K562 (cell line): ENCODE measurements at regions of chr1 and their contacts with region 1.

Region 1: DNA sequence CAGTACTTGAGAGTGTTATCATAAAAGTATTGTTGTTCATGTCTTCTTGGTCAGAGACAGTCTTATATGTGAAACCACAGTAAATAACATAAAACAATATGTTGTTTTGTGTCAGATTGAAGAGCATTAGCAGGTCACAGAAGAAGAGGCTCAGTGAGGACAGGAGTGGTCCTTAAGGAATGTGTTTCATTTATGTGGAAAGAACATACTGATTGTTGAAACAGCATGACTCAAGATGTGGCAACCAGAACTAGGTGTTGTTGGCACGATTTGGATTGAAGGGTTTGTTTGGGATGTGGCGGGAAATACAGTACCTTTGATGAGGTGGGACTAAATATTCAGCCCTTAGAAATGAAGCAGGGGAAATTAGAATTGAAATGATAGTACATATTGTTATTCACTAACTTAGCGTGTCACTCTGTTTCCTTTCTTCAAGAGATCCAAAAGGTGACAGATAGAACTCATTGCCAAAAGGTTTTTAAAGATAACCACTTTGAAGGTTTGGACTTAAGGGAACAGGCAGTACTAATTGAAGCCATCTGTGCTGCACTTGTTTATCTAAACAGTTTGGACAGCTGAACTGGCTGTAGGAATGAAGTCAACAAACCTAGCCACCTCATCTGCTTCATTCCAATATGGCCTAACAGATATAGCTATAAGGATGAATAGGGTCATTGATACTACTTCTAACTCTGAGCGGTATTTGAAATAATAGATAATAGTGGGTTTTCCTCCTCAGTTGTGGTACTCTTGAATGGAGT is 14.4 kb downstream of the RALGPS2 start:
- DNase-seq: no peak
- ATAC-seq: no peak
- H3K4me3 ChIP-seq: no peak overlapping the region
- H3K27ac ChIP-seq: no peak overlapping the region
- H3K4me1 ChIP-seq: no peaks in the 10 kb centered on the region
- H3K27me3 ChIP-seq: no peaks in the 10 kb centered on the region; a peak in 1 of 5 replicates
- CTCF ChIP-seq: no peak
- EP300 ChIP-seq: no peak
- POLR2A ChIP-seq: no peak
- RAD21 ChIP-seq: no peak

Region 2: GRCh38 chr1:178682429-178682828 is 57.0 kb before region 1 on chr1:
- CTCF ChIA-PET with region 1: no interaction called
- POLR2A ChIA-PET with region 1: no interaction called
- in situ Hi-C with region 1: no loop called
- intact Hi-C with region 1: no loop called
- DNase-seq: no peak
- ATAC-seq: no peak
- H3K4me3 ChIP-seq: no peak overlapping the region
- H3K27ac ChIP-seq: no peak overlapping the region
- H3K4me1 ChIP-seq: no peaks in the 10 kb centered on the region
- H3K27me3 ChIP-seq: no peaks in the 10 kb centered on the region; a peak in 1 of 5 replicates
- CTCF ChIP-seq: no peak
- EP300 ChIP-seq: no peak
- POLR2A ChIP-seq: no peak
- RAD21 ChIP-seq: no peak

Region 3: DNA sequence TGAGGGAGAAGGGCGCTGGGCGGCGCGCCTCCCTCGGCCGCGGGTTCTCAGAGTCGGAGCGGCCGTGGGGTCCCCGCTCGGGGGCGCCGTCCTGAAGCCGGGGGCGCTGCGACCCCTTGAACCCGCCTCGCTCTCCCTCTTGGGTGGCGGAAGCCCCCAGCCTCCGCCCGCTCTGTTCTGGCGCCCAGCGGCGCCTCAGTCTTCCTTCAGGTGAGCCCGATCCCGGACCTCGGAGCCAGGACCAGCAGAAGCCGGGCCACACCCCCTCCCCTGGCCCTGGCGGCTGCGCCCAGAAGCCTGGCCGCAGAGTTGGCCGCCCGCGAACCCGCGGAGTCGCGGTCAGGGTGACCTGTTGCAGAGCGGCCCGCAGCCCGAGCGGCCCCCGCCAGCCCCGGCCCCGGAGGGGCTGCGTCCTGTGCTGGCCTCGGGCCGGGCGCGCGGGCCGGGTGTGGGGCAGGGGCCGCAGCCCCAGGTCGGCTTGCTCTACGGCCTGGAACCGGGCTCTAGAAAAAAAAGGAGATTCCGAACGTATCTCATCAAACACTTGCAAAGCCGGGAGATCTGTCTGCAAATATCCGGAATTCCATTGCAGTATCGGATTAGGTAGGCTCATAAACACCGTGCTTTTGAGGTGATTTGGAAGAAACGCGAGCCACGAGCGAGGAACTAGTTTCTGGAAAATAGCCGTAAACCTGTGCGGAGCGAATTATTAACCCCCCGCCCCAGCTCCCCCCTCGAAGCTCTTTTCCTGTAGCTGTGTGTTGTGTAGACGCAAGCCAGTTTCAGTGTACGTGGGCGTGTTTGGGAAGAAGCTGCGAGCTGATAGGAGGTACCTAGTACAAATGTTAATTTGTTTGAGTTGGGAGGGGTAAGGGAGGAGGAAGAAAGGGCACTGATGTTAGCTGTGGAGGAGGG is 13.6 kb before region 1 on chr1:
- CTCF ChIA-PET with region 1: no interaction called
- POLR2A ChIA-PET with region 1: interaction called, 13 read pairs
- in situ Hi-C with region 1: no loop called
- intact Hi-C with region 1: no loop called
- DNase-seq: peak; percentile 77 to 90 (median 79)
- ATAC-seq: peak; percentile 89
- H3K4me3 ChIP-seq: peak overlapping the region; percentile 63
- H3K27ac ChIP-seq: peak overlapping the region; percentile 47; the same call in 2 of the 3 replicates
- H3K4me1 ChIP-seq: peaks cover 0 to 16% of the 10 kb centered on the region in 2 experiments; a peak in 4 of 5 replicates
- H3K27me3 ChIP-seq: 0 out of 5 replicates have a peak, but pooled peaks cover 0 to 5% of the 10 kb centered on the region in 2 experiments
- CTCF ChIP-seq: peak in 1 of 3 experiments; percentile 41; a peak in 1 of 6 replicates
- EP300 ChIP-seq: no peak
- POLR2A ChIP-seq: no peak
- RAD21 ChIP-seq: peak in 1 of 2 experiments; percentile 23; a peak in 1 of 4 replicates

Region 4: DNA sequence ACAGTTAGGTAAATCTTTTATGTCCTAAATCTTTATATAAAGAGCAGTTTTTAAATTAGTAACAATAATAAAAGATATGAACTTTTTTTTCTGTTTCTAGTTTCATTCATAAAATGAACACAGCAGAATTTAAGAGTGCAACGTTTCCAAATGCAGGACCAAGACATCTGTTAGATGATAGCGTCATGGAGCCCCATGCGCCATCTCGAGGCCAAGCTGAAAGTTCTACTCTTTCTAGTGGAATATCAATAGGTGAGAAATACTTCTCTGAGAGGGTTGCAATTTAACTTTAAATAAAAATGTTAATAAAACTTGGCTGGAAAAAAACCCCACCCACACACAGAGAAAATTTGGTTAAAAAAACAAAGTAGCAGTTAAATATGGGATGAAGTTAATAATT is 146.4 kb after region 1 on chr1:
- CTCF ChIA-PET with region 1: no interaction called
- POLR2A ChIA-PET with region 1: no interaction called
- in situ Hi-C with region 1: no loop called
- intact Hi-C with region 1: no loop called
- DNase-seq: peak in 1 of 4 experiments; percentile 38
- ATAC-seq: peak; percentile 87
- H3K4me3 ChIP-seq: no peak overlapping the region
- H3K27ac ChIP-seq: no peak overlapping the region
- H3K4me1 ChIP-seq: no peaks in the 10 kb centered on the region
- H3K27me3 ChIP-seq: no peaks in the 10 kb centered on the region
- CTCF ChIP-seq: peak; percentile 30 to 49 (median 36); a peak in 4 of 6 replicates
- EP300 ChIP-seq: no peak
- POLR2A ChIP-seq: no peak
- RAD21 ChIP-seq: no peak; a peak in 1 of 4 replicates